ENCODE measurements at regions of chr3 and their contacts with region 1.

Region 1: DNA sequence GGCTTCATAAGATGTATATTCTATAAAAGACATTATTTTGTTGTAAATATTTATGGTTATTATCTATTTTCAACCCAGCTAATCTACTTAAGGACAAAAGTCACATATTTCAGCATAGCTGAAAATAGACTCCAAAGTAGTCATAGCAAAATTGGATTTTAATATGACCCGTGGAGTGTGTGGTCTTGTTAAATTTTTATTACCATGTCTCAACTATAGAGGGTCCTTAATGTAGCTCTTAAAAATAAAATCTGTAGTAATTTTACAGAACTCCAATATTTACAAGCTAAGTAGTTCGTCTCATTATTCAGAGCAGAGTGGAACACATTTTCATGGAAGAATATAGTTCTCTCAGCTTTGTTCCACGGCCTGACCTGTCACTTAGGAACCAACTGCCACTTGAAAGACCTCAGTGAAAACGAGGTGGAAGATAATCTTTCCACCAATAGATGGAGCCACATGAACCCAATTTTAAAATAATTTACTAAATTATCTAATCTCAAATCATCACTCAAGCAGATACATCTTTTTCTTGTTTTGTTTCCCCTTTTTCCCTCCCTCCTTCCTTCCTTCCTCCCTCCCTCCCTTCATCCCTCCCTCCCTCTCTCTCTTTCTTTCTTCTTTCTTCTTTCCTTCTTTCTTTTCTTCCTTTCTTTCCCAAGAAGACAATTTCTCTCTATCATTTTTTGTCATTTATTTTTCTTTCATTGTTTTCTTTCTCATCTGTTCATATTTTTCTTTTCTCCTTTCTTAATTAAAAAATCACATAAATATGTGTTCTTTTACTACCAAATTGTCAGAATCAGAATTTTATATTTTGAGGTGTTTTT is 97.2 kb downstream of the CLDN1 start:
- DNase-seq: peak; percentile 48
- H3K4me3 ChIP-seq: no peak overlapping the region
- CTCF ChIP-seq: peak; percentile 46

Region 2: DNA sequence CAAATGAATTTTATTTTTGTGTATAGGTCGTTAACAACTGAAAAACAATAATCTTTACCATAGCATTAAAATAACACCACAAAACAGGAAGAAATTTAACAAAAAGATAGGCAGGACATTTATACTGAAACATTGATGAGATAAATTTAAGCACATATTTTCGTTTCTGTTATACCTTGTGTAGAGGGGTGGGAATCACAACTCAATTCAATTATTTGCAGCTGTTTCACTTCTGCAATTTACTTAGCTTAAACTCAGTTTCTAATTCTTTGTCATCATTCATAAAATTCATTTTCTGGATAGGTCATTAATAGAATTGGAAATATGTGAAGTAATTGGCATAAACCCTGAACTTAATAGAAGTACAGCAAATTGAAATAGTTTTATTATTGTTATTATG is 551.5 kb before region 1 on chr3:
- in situ Hi-C with region 1: no loop called
- DNase-seq: no peak
- H3K4me3 ChIP-seq: no peak overlapping the region
- CTCF ChIP-seq: no peak

Region 3: DNA sequence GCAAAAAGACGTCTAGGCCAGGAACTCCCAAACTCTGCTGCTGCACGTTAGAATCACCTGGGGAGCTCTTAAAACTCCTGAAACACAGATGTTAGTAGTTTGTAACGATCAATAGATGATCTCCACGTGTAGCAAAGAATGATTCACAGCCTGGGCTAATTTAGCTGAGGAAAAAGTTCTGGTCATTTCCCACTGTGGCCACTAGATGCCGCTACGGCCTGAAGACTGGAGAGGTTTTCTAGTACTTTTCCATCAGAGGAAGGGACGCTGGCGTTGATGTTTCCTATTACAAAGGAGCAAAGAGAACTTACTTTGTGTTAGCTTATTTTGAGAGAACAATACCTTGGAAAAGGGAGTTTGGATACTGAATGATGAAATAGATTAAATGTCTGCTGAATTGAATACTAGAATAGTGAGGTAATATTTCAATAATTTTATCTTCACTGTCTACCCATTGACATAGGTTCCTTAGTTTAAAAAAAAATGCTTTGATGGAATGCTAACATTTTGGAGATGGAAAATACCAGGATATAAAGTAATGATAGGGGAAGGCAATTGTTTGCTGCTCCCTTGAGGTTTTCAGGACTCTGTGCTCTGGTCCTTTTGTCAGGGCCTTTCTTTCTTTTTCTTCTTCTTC is 263.4 kb before region 1 on chr3:
- in situ Hi-C with region 1: loop called (anchors 25 kb)
- DNase-seq: peak; percentile 85
- H3K4me3 ChIP-seq: no peak overlapping the region
- CTCF ChIP-seq: peak; percentile 84

Measured in astrocyte of the spinal cord (primary cell).